Cardiac septum (tissue), 1 donor: ENCODE measurements at regions of chr2 and their contacts with region 1.

Region 1: GRCh38 chr2:40511661-40512213 is 59.8 kb upstream of the SLC8A1 start:
- DNase-seq: peak; percentile 74

Region 2: GRCh38 chr2:40127890-40128557 is 383.7 kb before region 1 on chr2:
- intact Hi-C with region 1: loop called (anchors 5 kb)
- DNase-seq: no peak

Region 3: DNA sequence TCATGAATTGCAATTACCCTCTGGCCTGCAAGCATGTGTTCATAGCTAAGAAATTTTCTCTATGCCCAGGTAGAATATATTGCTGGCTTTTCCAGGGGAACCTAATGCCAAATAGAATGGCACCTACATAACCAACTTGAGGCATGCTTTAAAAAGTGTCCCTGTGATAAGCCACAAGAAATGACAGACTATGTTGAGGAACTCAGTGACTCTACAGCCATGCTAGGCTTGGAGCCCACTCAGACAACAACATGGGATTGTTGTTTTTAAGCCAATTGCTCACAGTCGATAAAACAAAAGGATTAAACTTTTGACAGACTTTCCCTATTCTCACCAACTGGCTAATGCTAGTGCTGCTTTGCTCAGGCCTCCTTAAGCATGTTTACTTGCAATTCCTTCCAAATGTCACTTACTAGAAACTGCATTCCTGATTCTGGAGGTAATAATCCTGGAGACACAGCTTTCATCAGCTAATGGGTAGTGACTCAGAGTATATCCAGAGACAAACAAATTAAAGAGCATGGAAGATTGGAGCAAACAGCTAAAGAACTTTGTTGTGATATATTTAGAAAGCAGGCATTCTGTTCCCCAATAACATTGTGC is 308.8 kb before region 1 on chr2:
- intact Hi-C with region 1: no loop called
- DNase-seq: no peak

Region 4: DNA sequence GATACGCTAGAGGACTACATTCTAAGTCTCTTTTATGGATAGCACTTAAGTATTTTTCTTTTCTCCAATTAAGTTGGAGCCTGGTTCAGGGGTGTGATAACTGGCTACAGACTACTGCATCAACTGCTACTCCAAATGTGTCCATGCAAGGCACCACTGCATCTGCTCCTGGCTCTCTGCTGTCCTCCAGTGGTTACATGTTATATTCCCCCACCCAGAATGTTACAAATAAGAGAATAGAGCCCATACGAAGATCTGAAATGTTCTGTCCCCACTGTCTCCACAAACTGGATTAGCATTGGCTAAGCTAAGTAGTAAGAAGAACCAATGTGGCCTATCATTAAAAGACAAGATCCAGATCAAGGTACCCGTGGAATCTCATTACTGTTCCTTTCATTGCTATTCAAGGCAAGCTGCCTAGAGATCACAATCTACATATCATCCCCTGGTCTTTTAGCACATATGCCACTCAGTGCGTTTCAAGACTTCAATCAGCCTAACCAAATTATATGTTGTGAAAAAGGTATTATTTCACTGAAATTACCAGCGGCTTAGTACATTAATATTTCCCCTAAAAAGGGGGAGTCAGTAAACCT is 248.4 kb after region 1 on chr2:
- intact Hi-C with region 1: loop called (anchors 5 kb)
- DNase-seq: no peak